Psoas muscle (tissue), 8 donors: ENCODE measurements at regions of chr2 and their contacts with region 1.

Region 1: GRCh38 chr2:32425719-32426141 is 68.9 kb downstream of the BIRC6 start:
- DNase-seq: no peak
- ATAC-seq: peak; percentile 68 to 87 (median 78)
- H3K4me3 ChIP-seq: peak overlapping the region; percentile 28
- H3K27ac ChIP-seq: peak overlapping the region; percentile 77
- H3K4me1 ChIP-seq: peaks cover 39% of the 10 kb centered on the region
- H3K27me3 ChIP-seq: no peaks in the 10 kb centered on the region
- CTCF ChIP-seq: no peak

Region 2: DNA sequence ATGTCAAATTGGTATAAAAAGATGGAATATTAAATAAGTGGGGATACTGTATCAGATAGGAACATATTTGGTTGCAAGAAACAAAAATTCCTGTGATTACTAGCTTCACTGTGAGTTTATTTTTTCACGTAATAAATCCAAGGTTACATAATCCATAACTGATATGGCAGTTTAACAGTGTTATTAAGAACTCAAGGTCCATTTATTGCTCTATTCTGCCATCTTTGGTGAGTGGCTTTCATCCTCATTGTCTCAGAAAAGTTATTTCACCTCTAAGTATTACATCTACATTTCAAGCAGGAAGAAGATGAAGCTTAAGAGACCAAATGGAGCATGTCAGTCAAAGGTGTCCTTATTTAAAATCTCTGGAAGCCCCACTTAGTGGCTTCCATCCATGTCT is 110.8 kb before region 1 on chr2:
- intact Hi-C with region 1: no loop called
- DNase-seq: no peak
- ATAC-seq: no peak
- H3K4me3 ChIP-seq: no peak overlapping the region
- H3K27ac ChIP-seq: no peak overlapping the region
- H3K4me1 ChIP-seq: no peaks in the 10 kb centered on the region
- H3K27me3 ChIP-seq: no peaks in the 10 kb centered on the region
- CTCF ChIP-seq: no peak

Region 3: DNA sequence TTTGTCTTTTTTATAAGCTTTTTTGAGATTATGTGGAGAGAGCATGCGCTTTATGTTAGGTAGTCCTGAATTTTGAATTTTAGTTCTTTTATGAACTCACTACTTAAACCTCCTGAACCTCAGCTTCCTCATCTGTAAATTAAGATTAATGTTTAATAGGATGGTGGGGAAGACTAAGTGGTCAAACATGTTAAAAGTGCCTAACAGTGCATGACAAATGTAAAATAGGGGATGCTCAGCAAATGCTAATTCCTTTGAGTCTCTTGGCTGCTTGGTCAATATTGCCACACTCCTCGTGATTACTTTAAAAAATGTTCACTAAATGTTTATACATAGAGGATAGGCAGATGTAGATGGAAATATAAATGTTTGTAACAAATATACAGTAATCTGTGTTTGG is 62.1 kb before region 1 on chr2:
- intact Hi-C with region 1: loop called in 1 of 2 experiments (anchors 10 kb)
- DNase-seq: no peak
- ATAC-seq: no peak
- H3K4me3 ChIP-seq: no peak overlapping the region
- H3K27ac ChIP-seq: no peak overlapping the region
- H3K4me1 ChIP-seq: peaks cover 33% of the 10 kb centered on the region
- H3K27me3 ChIP-seq: no peaks in the 10 kb centered on the region
- CTCF ChIP-seq: no peak

Region 4: GRCh38 chr2:32377928-32378327 is 47.8 kb before region 1 on chr2:
- intact Hi-C with region 1: loop called in 1 of 2 experiments (anchors 10 kb)
- DNase-seq: no peak
- ATAC-seq: peak; percentile 83 to 96 (median 88)
- H3K4me3 ChIP-seq: no peak overlapping the region
- H3K27ac ChIP-seq: peak overlapping the region; percentile 75
- H3K4me1 ChIP-seq: peaks cover 28% of the 10 kb centered on the region
- H3K27me3 ChIP-seq: no peaks in the 10 kb centered on the region
- CTCF ChIP-seq: no peak

Region 5: GRCh38 chr2:32436150-32436549 is 10.4 kb after region 1 on chr2:
- intact Hi-C with region 1: no loop called
- DNase-seq: no peak
- ATAC-seq: no peak
- H3K4me3 ChIP-seq: no peak overlapping the region
- H3K27ac ChIP-seq: no peak overlapping the region
- H3K4me1 ChIP-seq: no peaks in the 10 kb centered on the region
- H3K27me3 ChIP-seq: no peaks in the 10 kb centered on the region
- CTCF ChIP-seq: no peak